ENCODE measurements at regions of chr22 and their contacts with region 1.

Region 1: DNA sequence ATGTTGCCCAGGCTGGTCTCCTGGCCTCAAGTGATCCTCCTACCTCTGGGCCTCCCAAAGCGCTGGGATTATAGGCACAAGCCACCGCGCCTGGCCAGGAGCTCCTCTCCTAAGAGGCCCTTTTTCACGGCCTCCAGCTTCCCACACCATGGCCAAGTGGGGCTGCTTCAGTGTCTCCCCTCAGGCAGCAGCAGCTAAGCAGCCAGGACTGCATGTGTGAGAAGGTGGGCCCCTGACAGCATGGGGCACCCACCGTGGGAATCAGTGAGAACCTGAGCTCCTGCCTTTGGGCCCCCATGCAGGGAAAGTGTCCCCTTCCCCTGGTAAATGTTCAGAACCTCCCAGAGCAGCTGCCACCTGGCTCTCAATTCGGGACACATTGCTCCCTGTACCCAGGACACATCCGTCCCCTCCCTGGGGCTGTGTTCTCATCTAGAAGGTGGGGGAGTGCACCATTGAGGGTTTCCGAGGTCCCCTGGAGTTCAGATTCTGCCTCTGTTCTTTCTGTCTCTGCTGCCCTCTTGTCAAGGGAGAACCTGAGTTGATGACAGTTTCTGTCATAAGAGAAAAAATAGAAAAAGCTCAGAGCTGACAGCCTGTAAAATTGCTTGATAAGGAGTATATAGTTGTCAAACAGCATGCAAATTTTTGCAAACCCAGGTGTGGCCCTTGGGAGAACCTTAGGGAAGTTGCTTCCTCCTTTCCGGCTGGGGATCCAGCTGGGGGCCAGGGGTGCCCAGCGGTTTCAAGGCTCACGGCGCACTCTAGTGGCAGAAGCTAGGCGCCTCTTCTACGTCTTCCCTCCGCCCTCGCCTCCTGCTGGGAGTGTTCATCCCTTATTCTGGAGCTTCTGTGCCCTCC is 29.7 kb downstream of the FAM83F start:
- DNase-seq: peak; percentile 69
- H3K4me3 Mint-ChIP-seq: no peak overlapping the region
- H3K27ac Mint-ChIP-seq: no peak overlapping the region
- H3K4me1 Mint-ChIP-seq: peaks cover 5% of the 10 kb centered on the region
- H3K27me3 Mint-ChIP-seq: no peaks in the 10 kb centered on the region

Region 2: GRCh38 chr22:39543095-39543494 is 481.3 kb before region 1 on chr22:
- CTCF ChIA-PET with region 1: interaction called, 90 read pairs
- POLR2A ChIA-PET with region 1: interaction called, 3 read pairs
- DNase-seq: no peak
- H3K4me3 Mint-ChIP-seq: no peak overlapping the region
- H3K27ac Mint-ChIP-seq: no peak overlapping the region
- H3K4me1 Mint-ChIP-seq: peaks cover 26% of the 10 kb centered on the region
- H3K27me3 Mint-ChIP-seq: peaks cover 36% of the 10 kb centered on the region

Region 3: DNA sequence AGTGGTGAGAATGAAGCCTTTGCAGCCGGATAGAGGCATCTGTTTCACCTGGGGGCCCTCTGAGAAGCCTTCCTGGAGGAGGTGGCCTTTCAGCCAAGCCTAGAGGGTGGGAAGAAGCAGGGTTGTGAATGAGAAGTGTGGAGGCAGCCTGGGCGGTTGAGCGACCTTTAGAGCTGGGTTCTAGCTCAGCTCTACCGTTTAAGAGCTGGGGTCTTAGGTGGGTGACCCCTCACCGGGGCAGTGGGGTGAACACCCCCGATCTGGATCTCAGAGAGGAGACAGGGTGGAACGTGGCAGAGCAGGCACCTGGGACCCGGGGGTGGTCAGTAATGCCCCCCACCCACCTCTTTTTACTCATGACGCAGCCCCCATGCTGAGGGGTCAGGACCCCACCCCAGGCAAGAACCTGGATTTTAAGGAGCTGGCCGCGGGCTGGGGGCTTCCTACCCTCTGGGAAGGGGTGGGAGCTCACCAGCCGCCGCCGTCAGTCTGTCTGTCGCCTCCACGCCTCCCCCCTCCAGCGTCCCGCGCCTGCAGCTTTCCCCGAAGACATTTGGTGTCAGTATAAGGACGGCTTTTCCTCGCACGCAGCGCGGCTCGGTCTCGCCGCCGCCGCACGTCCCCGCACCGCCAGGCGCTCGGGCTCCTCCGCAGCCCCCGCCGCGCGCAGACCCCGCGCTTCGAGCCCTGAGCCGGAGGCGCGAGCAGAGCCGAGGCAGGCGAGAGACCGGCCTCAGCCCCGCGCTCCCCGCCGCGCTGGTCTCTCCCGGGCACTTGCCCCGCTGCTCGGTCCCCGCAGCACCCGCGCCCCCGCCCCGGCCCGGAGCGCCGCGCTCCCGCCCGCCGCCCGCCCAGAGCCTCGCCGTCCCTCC is 467.2 kb before region 1 on chr22:
- CTCF ChIA-PET with region 1: interaction called, 14 read pairs
- POLR2A ChIA-PET with region 1: no interaction called
- DNase-seq: peak; percentile 43
- H3K4me3 Mint-ChIP-seq: no peak overlapping the region
- H3K27ac Mint-ChIP-seq: no peak overlapping the region
- H3K4me1 Mint-ChIP-seq: peaks cover 7% of the 10 kb centered on the region
- H3K27me3 Mint-ChIP-seq: peaks cover 54% of the 10 kb centered on the region

Region 4: DNA sequence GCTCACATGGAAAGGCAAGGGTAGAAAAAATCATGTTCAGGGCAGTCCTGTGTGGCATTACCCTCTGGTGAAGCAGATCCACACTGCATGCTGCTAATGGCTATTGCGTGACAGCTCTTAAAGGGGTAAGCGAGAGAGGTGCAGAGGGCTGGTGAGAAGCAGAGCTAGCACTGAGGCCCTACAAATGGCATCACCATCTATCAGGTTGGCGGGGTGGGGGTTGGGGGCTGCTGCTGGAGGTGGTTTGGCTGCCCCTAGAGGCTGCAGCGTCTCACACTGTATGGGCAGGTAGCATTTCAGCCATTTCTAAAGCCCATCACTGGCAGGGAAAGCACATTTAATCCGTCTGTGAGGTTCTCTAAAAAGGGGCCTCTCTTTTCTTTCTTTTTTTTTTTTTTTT is 81.1 kb before region 1 on chr22:
- CTCF ChIA-PET with region 1: interaction called, 12 read pairs
- POLR2A ChIA-PET with region 1: no interaction called
- DNase-seq: no peak
- H3K4me3 Mint-ChIP-seq: no peak overlapping the region
- H3K27ac Mint-ChIP-seq: peak overlapping the region; percentile 65
- H3K4me1 Mint-ChIP-seq: peaks cover 79% of the 10 kb centered on the region
- H3K27me3 Mint-ChIP-seq: no peaks in the 10 kb centered on the region

Region 5: DNA sequence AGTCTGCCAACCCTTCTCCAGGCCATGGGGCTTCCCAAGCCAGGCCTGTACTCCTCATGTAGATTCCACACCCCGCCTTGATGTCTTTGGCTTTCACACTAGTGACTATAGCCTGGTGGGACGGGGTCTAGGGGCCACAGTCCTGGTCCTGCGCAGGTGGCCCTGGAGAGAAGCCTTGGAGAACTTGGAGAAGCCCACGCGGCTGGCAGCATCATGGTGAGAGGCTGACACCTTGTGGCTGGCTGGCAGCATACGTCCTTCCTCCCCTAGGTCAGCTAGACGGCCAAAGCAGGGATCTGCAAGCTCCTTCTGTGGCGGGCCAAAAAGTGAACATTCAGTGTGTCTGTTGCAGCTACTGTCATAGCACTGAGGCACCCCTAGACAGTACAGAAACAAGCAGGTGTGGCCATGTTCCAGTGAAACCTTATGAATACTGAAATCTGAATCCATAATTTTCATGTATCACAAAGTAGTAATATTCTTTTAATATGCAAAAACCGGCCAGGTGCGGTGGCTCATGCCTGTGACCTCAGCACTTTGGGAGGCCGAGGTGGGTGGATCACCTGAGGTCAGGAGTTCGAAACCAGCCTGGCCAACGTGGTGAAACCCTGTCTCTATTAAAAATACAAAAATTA is 12.3 kb after region 1 on chr22:
- CTCF ChIA-PET with region 1: interaction called, 32 read pairs
- POLR2A ChIA-PET with region 1: interaction called, 4 read pairs
- DNase-seq: peak; percentile 63
- H3K4me3 Mint-ChIP-seq: no peak overlapping the region
- H3K27ac Mint-ChIP-seq: no peak overlapping the region
- H3K4me1 Mint-ChIP-seq: no peaks in the 10 kb centered on the region
- H3K27me3 Mint-ChIP-seq: peaks cover 19% of the 10 kb centered on the region

Region 6: GRCh38 chr22:40076702-40077645 is 52.5 kb after region 1 on chr22:
- CTCF ChIA-PET with region 1: no interaction called
- POLR2A ChIA-PET with region 1: no interaction called
- DNase-seq: no peak
- H3K4me3 Mint-ChIP-seq: no peak overlapping the region
- H3K27ac Mint-ChIP-seq: no peak overlapping the region
- H3K4me1 Mint-ChIP-seq: peaks cover 23% of the 10 kb centered on the region
- H3K27me3 Mint-ChIP-seq: no peaks in the 10 kb centered on the region

Region 7: GRCh38 chr22:40121461-40121860 is 97.0 kb after region 1 on chr22:
- CTCF ChIA-PET with region 1: no interaction called
- POLR2A ChIA-PET with region 1: no interaction called
- DNase-seq: no peak
- H3K4me3 Mint-ChIP-seq: no peak overlapping the region
- H3K27ac Mint-ChIP-seq: no peak overlapping the region
- H3K4me1 Mint-ChIP-seq: peaks cover 19% of the 10 kb centered on the region
- H3K27me3 Mint-ChIP-seq: no peaks in the 10 kb centered on the region